ENCODE measurements at regions of chr2 and their contacts with region 1.

Region 1: GRCh38 chr2:69798909-69799526 is 30.4 kb upstream of the GMCL1 start:
- DNase-seq: no peak
- ATAC-seq: no peak
- H3K4me3 ChIP-seq: peak overlapping the region; percentile 47 to 57
- H3K27ac ChIP-seq: peak overlapping the region; percentile 38 to 56
- H3K4me1 ChIP-seq: peaks cover 0 to 15% of the 10 kb centered on the region in 2 donors
- H3K27me3 ChIP-seq: no peaks in the 10 kb centered on the region

Region 2: GRCh38 chr2:69634196-69634821 is 164.7 kb before region 1 on chr2:
- intact Hi-C with region 1: no loop called
- DNase-seq: no peak
- ATAC-seq: no peak
- H3K4me3 ChIP-seq: no peak overlapping the region
- H3K27ac ChIP-seq: no peak overlapping the region
- H3K4me1 ChIP-seq: peaks cover 4 to 10% of the 10 kb centered on the region in 2 donors
- H3K27me3 ChIP-seq: no peaks in the 10 kb centered on the region

Region 3: GRCh38 chr2:69741619-69742466 is 57.2 kb before region 1 on chr2 and contains the start of gene ANXA4:
- intact Hi-C with region 1: loop called in 1 of 2 experiments (anchors 5 kb)
- DNase-seq: peak; percentile 91 to 92
- ATAC-seq: peak; percentile 89
- H3K4me3 ChIP-seq: peak within 1 kb of the TSS; percentile 90 to 93
- H3K27ac ChIP-seq: peak within 1 kb of the TSS; percentile 32 to 94
- H3K4me1 ChIP-seq: peaks cover 0 to 2% of the 10 kb centered on the region in 2 donors
- H3K27me3 ChIP-seq: no peaks in the 10 kb centered on the region
- total RNA-seq, gene ANXA4: 94.6 to 120 TPM

Measured in aorta (tissue), 5 donors.